CD4-positive, alpha-beta memory T cell (primary cell): ENCODE measurements at regions of chr4 and their contacts with region 1.

Region 1: DNA sequence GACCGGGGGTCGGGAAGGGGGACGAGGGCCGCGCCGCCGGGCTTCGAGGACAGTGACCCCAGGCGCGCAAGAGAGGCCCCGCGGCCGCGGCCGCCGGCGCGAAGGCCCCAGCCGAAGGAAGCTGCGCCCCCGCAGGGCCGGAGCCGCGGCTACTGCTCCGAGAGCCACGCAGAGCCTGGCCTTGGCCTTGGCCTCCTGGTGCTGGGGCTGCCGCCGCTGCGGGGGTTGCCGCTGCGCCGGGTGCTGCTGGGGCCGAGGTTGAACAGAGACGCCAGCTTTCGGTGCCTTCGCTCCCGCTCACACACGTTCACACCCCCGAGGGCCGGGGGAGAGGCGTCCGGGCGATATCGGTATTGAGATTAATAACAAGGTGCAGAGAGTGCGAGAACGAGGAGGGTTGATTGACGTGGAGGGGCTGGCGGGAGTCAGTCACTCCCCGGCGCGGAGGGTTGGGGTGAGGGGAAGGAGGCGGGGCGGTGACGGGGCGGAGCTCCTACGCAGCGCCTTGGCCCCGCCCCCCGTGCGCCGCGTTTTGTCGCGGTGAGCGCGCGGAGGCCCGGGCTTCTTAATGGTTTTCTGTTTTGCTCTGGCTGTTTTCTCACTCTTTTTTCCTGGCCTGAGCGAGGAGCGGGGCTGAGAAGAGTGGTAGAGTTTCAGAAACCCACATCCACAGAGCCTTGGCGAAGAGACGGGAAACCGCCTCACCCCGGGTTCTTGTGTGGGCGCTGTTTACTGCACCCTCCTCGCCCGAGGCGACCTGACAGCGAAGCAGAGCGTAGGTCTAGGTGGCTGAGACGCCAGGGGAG is 878 bp upstream of the CNOT6L start:
- DNase-seq: peak; percentile 96 to 97 (median 97)
- H3K4me3 ChIP-seq: peak overlapping the region; percentile 80 to 86
- H3K4me3 Mint-ChIP-seq: peak overlapping the region; percentile 90 to 98 (median 94)
- H3K27ac ChIP-seq: peak overlapping the region; percentile 98
- H3K27ac Mint-ChIP-seq: peak overlapping the region; percentile 94 to 100 (median 99)
- H3K4me1 ChIP-seq: peaks cover 62% of the 10 kb centered on the region
- H3K4me1 Mint-ChIP-seq: peaks cover 34 to 66% (median 46%) of the 10 kb centered on the region in 4 donors
- H3K27me3 ChIP-seq: no peaks in the 10 kb centered on the region
- H3K27me3 Mint-ChIP-seq: peaks cover 0 to 4% of the 10 kb centered on the region in 2 donors

Region 2: GRCh38 chr4:77777135-77777807 is 42.8 kb before region 1 on chr4:
- CTCF ChIA-PET with region 1: interaction called, 3 read pairs
- POLR2A ChIA-PET with region 1: interaction called, 5 read pairs
- intact Hi-C with region 1: loop called (anchors 5 kb)
- DNase-seq: no peak
- H3K4me3 ChIP-seq: no peak overlapping the region
- H3K4me3 Mint-ChIP-seq: peak overlapping the region in 5 of 8 donors; percentile 15 to 40 (median 31)
- H3K27ac ChIP-seq: no peak overlapping the region
- H3K27ac Mint-ChIP-seq: peak overlapping the region in 5 of 7 donors; percentile 5 to 82 (median 40)
- H3K4me1 ChIP-seq: peaks cover 42% of the 10 kb centered on the region
- H3K4me1 Mint-ChIP-seq: peaks cover 41 to 61% (median 47%) of the 10 kb centered on the region in 4 donors
- H3K27me3 ChIP-seq: no peaks in the 10 kb centered on the region
- H3K27me3 Mint-ChIP-seq: no peaks in the 10 kb centered on the region

Region 3: DNA sequence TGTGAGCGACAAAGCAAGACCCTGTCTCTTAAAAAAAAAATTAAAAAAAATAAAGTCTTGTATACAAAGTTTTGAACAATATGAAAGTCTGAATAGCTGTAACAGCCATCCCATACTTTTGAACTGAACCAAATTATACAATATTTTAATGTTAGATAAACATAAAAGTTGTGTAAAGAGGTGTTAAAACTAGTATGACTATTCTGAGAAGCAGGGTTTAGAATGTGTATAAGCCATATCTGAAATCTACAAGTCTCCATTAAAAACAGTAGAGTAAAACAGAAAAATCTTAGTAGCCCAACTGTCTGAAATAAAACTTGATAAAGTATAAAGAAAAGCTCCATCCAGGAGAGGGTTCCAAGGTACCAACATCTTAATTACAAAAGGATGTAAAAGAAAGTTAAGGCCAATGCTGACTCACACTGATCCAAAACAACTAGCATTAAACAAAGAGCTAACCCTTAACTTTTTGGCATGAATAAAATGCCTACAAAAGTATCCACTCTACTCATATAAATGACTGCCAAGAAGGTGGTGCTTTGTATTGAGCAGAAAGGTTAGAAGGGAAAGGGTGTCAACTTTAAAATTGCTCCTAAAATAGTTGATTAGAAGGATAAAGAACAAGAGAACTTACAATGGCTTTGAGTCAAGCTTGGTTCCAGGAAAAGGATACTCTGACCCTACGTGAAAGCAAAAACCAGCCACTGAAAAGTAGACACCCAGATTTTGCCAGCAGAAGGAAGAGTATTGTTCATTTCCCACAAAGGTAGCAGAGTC is 19.4 kb before region 1 on chr4:
- CTCF ChIA-PET with region 1: interaction called, 18 read pairs
- POLR2A ChIA-PET with region 1: interaction called, 83 read pairs
- intact Hi-C with region 1: loop called (anchors 1 kb)
- DNase-seq: no peak
- H3K4me3 ChIP-seq: peak overlapping the region in 1 of 2 donors; percentile 21
- H3K4me3 Mint-ChIP-seq: peak overlapping the region; percentile 59 to 84 (median 80)
- H3K27ac ChIP-seq: peak overlapping the region; percentile 49
- H3K27ac Mint-ChIP-seq: peak overlapping the region; percentile 18 to 90 (median 62)
- H3K4me1 ChIP-seq: peaks cover 95% of the 10 kb centered on the region
- H3K4me1 Mint-ChIP-seq: peaks cover 47 to 92% (median 67%) of the 10 kb centered on the region in 4 donors
- H3K27me3 ChIP-seq: no peaks in the 10 kb centered on the region
- H3K27me3 Mint-ChIP-seq: no peaks in the 10 kb centered on the region

Region 4: DNA sequence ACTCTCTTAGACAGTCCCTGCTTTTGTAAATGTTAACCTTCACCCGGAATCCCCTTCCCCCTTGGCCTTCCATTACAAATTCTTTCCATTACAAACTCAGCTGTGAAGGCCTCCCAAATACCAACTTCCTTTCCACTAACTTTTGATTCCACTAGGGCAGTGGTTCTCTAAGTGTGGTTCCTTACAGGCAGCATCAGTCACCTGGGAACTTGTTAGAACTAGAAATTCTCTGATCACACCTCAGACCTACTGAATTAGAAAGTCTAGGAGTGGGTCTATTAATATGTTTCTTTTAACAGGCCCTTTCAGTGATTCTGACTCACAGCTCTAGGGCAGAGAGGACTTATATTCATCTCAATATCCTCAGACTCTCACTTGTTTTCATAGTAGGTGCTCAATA is 23.6 kb after region 1 on chr4:
- CTCF ChIA-PET with region 1: interaction called, 3 read pairs
- POLR2A ChIA-PET with region 1: interaction called, 11 read pairs
- intact Hi-C with region 1: no loop called
- DNase-seq: no peak
- H3K4me3 ChIP-seq: no peak overlapping the region
- H3K4me3 Mint-ChIP-seq: no peak overlapping the region
- H3K27ac ChIP-seq: no peak overlapping the region
- H3K27ac Mint-ChIP-seq: peak overlapping the region in 4 of 7 donors; percentile 45 to 76 (median 48)
- H3K4me1 ChIP-seq: no peaks in the 10 kb centered on the region
- H3K4me1 Mint-ChIP-seq: peaks cover 5 to 13% (median 7%) of the 10 kb centered on the region in 4 donors
- H3K27me3 ChIP-seq: no peaks in the 10 kb centered on the region
- H3K27me3 Mint-ChIP-seq: no peaks in the 10 kb centered on the region

Region 5: DNA sequence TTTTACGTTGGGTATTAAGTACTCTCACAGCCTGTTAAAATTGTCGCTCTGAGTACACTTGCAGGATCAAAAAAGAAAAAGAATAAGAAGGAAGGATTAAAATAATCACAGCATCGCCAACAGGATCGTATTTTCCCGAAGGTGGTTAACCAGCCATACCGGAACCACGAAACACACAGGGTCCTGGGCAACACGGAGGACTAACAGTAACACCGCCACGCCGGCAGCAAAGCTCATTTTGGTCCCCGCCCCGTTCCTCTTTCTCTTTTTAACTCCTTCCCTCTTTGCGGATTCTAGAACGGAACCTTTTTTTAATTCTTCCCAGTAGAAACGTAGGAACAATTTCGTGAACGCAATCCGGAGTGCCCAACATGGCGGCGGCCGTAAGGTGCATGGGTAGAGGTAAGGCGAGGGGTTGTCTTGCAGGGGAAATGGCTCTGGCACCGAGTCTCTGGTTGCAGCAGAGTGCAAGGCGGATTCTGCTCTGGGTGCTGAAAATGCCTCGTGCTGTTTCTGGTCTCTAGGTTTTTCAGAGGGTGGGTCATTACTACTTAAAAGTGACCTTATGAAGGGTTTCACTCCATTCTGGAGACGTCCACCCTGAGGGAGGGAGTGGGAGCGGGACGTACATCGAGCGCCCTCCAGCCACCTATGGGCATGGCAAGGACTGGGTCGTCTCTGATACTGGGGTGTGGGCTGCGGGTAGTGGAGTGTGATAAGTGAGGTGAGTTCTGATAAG is 42.6 kb after region 1 on chr4 and contains the start of gene MRPL1:
- CTCF ChIA-PET with region 1: interaction called, 43 read pairs
- POLR2A ChIA-PET with region 1: interaction called, 908 read pairs
- intact Hi-C with region 1: loop called (anchors 1 kb)
- DNase-seq: peak; percentile 90 to 95 (median 93)
- H3K4me3 ChIP-seq: peak within 1 kb of the TSS; percentile 74 to 99
- H3K4me3 Mint-ChIP-seq: peak within 1 kb of the TSS; percentile 92 to 98 (median 95)
- H3K27ac ChIP-seq: peak within 1 kb of the TSS; percentile 99
- H3K27ac Mint-ChIP-seq: peak within 1 kb of the TSS; percentile 96 to 100 (median 99)
- H3K4me1 ChIP-seq: peaks cover 56% of the 10 kb centered on the region
- H3K4me1 Mint-ChIP-seq: peaks cover 32 to 70% (median 50%) of the 10 kb centered on the region in 4 donors
- H3K27me3 ChIP-seq: no peaks in the 10 kb centered on the region
- H3K27me3 Mint-ChIP-seq: peaks cover 0 to 7% of the 10 kb centered on the region in 2 donors
- total RNA-seq, gene MRPL1: 18.6 to 23.3 TPM

Region 6: DNA sequence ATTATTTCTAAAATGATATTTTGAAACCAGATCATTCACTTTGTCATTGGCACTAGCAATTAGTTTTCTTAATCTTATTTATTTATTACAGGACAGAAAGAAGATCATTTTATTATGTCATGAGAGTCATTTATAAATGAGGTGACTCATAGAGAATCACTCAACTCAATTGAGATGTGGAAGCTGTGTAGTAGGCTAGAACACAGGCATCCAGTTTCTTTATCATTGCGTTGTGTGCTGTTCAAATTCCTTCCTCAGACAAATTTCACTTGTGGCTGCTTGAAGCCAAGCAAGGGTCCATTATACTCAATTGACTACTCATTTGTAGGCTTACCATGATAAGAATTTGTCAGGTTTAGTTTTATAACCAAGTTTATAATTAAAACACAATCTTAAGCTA is 130.2 kb after region 1 on chr4:
- CTCF ChIA-PET with region 1: no interaction called
- POLR2A ChIA-PET with region 1: no interaction called
- intact Hi-C with region 1: no loop called
- DNase-seq: no peak
- H3K4me3 ChIP-seq: no peak overlapping the region
- H3K4me3 Mint-ChIP-seq: no peak overlapping the region
- H3K27ac ChIP-seq: no peak overlapping the region
- H3K27ac Mint-ChIP-seq: peak overlapping the region in 1 of 7 donors; percentile 4
- H3K4me1 ChIP-seq: no peaks in the 10 kb centered on the region
- H3K4me1 Mint-ChIP-seq: peaks cover 0 to 5% (median 0%) of the 10 kb centered on the region in 4 donors
- H3K27me3 ChIP-seq: no peaks in the 10 kb centered on the region
- H3K27me3 Mint-ChIP-seq: no peaks in the 10 kb centered on the region